ENCODE measurements at regions of chr12 and their contacts with region 1.

Region 1: GRCh38 chr12:123043536-123044001 is 63.1 kb downstream of the ARL6IP4 start:
- DNase-seq: peak; percentile 75
- ATAC-seq: peak; percentile 94
- H3K4me3 ChIP-seq: no peak overlapping the region
- H3K4me3 Mint-ChIP-seq: peak overlapping the region; percentile 27
- H3K27ac ChIP-seq: no peak overlapping the region
- H3K27ac Mint-ChIP-seq: peak overlapping the region; percentile 22
- H3K4me1 ChIP-seq: peaks cover 9 to 11% of the 10 kb centered on the region in 2 donors
- H3K4me1 Mint-ChIP-seq: peaks cover 29% of the 10 kb centered on the region
- H3K27me3 ChIP-seq: no peaks in the 10 kb centered on the region
- H3K27me3 Mint-ChIP-seq: no peaks in the 10 kb centered on the region
- CTCF ChIP-seq: peak; percentile 55

Region 2: GRCh38 chr12:123056053-123056741 is 12.6 kb after region 1 on chr12:
- CTCF ChIA-PET with region 1: interaction called, 20 read pairs
- POLR2A ChIA-PET with region 1: interaction called, 7 read pairs
- intact Hi-C with region 1: no loop called
- DNase-seq: no peak
- ATAC-seq: no peak
- H3K4me3 ChIP-seq: no peak overlapping the region
- H3K4me3 Mint-ChIP-seq: no peak overlapping the region
- H3K27ac ChIP-seq: no peak overlapping the region
- H3K27ac Mint-ChIP-seq: no peak overlapping the region
- H3K4me1 ChIP-seq: peaks cover 11 to 19% of the 10 kb centered on the region in 2 donors
- H3K4me1 Mint-ChIP-seq: peaks cover 29% of the 10 kb centered on the region
- H3K27me3 ChIP-seq: no peaks in the 10 kb centered on the region
- H3K27me3 Mint-ChIP-seq: no peaks in the 10 kb centered on the region
- CTCF ChIP-seq: no peak

Region 3: GRCh38 chr12:123106628-123107359 is 63.2 kb after region 1 on chr12:
- CTCF ChIA-PET with region 1: interaction called, 13 read pairs
- POLR2A ChIA-PET with region 1: no interaction called
- intact Hi-C with region 1: no loop called
- DNase-seq: peak; percentile 45
- ATAC-seq: peak; percentile 95
- H3K4me3 ChIP-seq: peak overlapping the region in 3 of 5 experiments; percentile 20 to 36 (median 20)
- H3K4me3 Mint-ChIP-seq: peak overlapping the region; percentile 78
- H3K27ac ChIP-seq: peak overlapping the region; percentile 74 to 81
- H3K27ac Mint-ChIP-seq: peak overlapping the region; percentile 97
- H3K4me1 ChIP-seq: peaks cover 25 to 32% of the 10 kb centered on the region in 2 donors
- H3K4me1 Mint-ChIP-seq: peaks cover 41% of the 10 kb centered on the region
- H3K27me3 ChIP-seq: no peaks in the 10 kb centered on the region
- H3K27me3 Mint-ChIP-seq: no peaks in the 10 kb centered on the region
- CTCF ChIP-seq: no peak

Region 4: DNA sequence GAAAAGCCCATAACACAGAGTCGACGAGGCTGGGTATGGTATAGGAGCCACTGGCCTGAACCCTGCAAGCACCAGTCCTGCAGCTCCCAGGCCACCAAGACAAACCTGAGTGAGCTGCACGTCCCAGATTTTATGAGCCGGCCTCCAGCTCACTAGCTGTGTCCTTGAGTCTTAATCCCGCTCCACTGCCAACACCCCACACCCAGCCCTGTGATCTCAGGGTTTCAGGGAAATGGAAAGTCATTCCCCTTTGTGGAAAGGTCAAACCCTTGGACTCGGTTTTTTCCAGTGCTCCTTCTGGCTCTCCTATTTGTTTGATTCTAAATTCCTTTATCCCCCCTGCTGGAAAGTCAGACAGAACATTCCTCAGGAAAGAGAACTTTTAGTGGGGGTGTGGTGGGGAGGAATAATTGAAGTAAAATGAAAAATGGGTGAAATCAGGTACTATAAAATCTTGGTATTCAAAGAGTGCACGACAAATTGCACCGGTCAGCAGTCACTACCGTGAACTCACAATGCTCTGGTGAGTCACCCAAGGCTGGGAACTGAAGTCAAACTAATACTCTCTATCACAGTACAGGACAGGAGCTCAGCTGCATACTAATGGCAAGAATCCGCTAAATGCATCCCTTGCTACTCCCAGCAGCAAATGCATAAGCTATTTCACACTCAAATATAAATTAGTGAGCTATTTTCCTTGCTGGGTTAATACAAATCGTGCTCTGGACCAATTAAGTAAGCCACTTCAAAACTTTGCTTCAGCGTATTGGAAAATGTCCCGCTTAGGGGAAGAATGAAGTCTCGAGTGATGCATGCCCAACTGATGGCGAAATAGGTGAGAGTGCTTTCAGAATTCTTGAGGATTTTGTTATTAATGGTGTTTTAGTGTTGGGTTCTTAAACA is 98.3 kb after region 1 on chr12:
- CTCF ChIA-PET with region 1: interaction called, 10 read pairs
- POLR2A ChIA-PET with region 1: no interaction called
- intact Hi-C with region 1: no loop called
- DNase-seq: no peak
- ATAC-seq: no peak
- H3K4me3 ChIP-seq: no peak overlapping the region
- H3K4me3 Mint-ChIP-seq: no peak overlapping the region
- H3K27ac ChIP-seq: no peak overlapping the region
- H3K27ac Mint-ChIP-seq: no peak overlapping the region
- H3K4me1 ChIP-seq: peaks cover 25 to 29% of the 10 kb centered on the region in 2 donors
- H3K4me1 Mint-ChIP-seq: peaks cover 42% of the 10 kb centered on the region
- H3K27me3 ChIP-seq: no peaks in the 10 kb centered on the region
- H3K27me3 Mint-ChIP-seq: no peaks in the 10 kb centered on the region
- CTCF ChIP-seq: no peak

Region 5: GRCh38 chr12:123200414-123200813 is 156.8 kb after region 1 on chr12:
- CTCF ChIA-PET with region 1: interaction called, 15 read pairs
- POLR2A ChIA-PET with region 1: no interaction called
- intact Hi-C with region 1: no loop called
- DNase-seq: no peak
- ATAC-seq: no peak
- H3K4me3 ChIP-seq: no peak overlapping the region
- H3K4me3 Mint-ChIP-seq: no peak overlapping the region
- H3K27ac ChIP-seq: no peak overlapping the region
- H3K27ac Mint-ChIP-seq: no peak overlapping the region
- H3K4me1 ChIP-seq: no peaks in the 10 kb centered on the region
- H3K4me1 Mint-ChIP-seq: peaks cover 1% of the 10 kb centered on the region
- H3K27me3 ChIP-seq: no peaks in the 10 kb centered on the region
- H3K27me3 Mint-ChIP-seq: no peaks in the 10 kb centered on the region
- CTCF ChIP-seq: no peak